Esophagus muscularis mucosa (tissue), 4 donors: ENCODE measurements at regions of chr1 and their contacts with region 1.

Region 1: DNA sequence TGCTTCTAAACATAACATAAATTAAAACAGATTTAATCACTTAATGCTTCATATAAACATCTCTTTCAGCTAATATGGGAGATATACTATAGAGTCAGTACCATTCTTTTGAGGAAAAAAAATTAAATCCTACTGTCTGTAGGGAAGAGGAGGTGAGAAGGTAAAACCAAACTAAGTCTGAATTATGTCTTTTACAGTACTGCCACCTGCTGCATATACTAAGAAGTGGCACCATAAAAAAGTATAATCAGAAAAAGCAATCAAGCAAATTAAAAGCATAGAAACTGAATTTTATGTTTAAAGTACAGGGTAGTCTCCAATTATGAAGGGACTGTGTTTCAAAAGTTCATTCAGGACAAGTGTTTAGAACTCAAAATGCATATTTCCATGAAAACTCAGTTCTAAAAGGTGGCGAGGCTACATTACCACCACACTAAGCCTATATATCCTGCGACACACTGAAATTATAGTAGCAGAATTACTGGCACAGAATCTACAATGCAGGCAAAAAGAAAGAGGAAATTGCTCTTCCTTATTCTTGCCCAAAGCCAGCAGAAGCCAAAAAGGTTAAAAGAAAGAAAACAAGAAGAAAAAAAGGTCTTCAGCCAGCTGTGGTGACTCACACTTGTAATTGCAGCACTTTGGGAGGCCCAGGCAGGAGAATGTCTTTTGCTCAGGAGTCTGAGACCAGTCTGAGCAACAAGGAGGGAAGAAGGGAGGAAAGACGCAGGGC is 9.0 kb downstream of the NSL1 start:
- DNase-seq: no peak
- H3K4me3 ChIP-seq: no peak overlapping the region
- H3K27ac ChIP-seq: no peak overlapping the region
- H3K4me1 ChIP-seq: no peaks in the 10 kb centered on the region
- H3K27me3 ChIP-seq: no peaks in the 10 kb centered on the region
- CTCF ChIP-seq: peak; percentile 49 to 63 (median 50)
- EP300 ChIP-seq: no peak
- POLR2A ChIP-seq: no peak

Region 2: DNA sequence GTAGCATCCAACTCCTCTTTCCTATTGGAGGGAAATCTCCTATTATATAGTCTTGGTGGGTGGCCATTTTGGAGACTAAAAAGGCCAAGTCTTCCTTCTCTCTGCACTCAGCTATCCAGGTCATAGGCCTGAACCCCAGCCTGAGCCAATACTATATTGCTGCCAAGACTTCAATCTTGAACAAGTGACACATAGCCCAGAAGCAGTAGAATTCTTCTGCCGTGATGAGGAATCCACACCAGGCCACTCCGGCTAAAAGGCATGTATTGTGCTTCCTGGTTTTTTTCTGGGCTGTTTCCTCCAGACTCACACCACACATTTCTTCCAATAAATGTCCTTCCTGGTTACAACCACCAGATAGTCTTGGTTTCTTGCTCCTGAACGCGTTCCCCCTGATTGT is 131.1 kb before region 1 on chr1:
- intact Hi-C with region 1: no loop called
- DNase-seq: no peak
- H3K4me3 ChIP-seq: no peak overlapping the region
- H3K27ac ChIP-seq: no peak overlapping the region
- H3K4me1 ChIP-seq: no peaks in the 10 kb centered on the region
- H3K27me3 ChIP-seq: no peaks in the 10 kb centered on the region
- CTCF ChIP-seq: no peak
- EP300 ChIP-seq: no peak
- POLR2A ChIP-seq: no peak

Region 3: DNA sequence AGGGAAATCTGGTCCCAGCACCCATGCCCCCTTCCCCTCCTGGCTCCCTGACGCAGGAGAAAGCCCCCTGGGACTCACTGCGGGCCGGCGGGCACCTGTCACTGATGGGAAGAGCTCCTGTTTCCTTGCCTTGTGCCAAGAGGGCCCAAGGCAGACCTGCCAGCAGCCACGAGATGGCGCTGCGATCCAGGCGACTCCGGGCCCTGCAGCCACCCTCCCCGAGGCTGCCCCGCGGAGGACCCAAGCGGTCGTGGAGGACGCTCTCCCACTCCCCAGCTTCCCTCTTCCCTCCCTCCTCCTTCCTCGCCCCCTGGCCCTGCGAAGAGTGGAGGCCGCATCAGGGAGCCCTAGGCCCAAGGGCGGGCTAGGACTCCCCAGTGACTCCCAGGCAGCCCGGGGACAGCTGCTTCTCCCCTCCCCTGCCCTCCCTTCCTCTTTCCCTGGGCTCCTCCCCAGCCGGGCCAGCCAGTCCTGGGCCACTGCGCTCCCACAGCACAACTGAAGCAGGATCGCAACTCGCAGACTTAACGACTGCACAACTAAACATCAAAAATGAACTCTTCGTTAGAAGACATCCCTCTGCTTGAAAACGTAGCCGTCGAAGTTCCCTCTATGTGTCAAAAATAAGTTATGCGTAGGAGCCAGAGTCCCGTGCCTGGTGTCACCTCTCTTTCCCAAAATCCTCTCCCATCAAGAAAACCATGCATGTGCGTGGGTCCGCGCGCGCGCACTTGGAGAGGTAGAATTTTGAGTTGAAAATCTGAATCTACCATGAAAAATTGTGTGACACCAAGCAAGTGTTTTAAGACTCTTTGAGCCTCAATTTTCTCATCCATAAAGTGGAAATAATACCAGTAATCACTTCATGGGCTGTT is 117.1 kb before region 1 on chr1:
- intact Hi-C with region 1: loop called (anchors 5 kb)
- DNase-seq: peak; percentile 96
- H3K4me3 ChIP-seq: peak overlapping the region; percentile 62 to 83 (median 64)
- H3K27ac ChIP-seq: peak overlapping the region; percentile 72 to 82 (median 77)
- H3K4me1 ChIP-seq: peaks cover 28 to 38% (median 37%) of the 10 kb centered on the region in 4 donors
- H3K27me3 ChIP-seq: no peaks in the 10 kb centered on the region
- CTCF ChIP-seq: peak in 2 of 3 experiments; percentile 90 to 97
- EP300 ChIP-seq: no peak
- POLR2A ChIP-seq: no peak